Transverse colon (tissue), 4 donors: ENCODE measurements at regions of chr11 and their contacts with region 1.

Region 1: GRCh38 chr11:62081378-62082291 is 42.2 kb upstream of the INCENP start:
- DNase-seq: peak; percentile 86
- H3K4me3 ChIP-seq: no peak overlapping the region
- H3K27ac ChIP-seq: no peak overlapping the region
- H3K4me1 ChIP-seq: peaks cover 0 to 7% (median 5%) of the 10 kb centered on the region in 4 donors
- H3K27me3 ChIP-seq: no peaks in the 10 kb centered on the region
- CTCF ChIP-seq: peak; percentile 89 to 90 (median 90)
- EP300 ChIP-seq: no peak
- POLR2A ChIP-seq: no peak

Region 2: DNA sequence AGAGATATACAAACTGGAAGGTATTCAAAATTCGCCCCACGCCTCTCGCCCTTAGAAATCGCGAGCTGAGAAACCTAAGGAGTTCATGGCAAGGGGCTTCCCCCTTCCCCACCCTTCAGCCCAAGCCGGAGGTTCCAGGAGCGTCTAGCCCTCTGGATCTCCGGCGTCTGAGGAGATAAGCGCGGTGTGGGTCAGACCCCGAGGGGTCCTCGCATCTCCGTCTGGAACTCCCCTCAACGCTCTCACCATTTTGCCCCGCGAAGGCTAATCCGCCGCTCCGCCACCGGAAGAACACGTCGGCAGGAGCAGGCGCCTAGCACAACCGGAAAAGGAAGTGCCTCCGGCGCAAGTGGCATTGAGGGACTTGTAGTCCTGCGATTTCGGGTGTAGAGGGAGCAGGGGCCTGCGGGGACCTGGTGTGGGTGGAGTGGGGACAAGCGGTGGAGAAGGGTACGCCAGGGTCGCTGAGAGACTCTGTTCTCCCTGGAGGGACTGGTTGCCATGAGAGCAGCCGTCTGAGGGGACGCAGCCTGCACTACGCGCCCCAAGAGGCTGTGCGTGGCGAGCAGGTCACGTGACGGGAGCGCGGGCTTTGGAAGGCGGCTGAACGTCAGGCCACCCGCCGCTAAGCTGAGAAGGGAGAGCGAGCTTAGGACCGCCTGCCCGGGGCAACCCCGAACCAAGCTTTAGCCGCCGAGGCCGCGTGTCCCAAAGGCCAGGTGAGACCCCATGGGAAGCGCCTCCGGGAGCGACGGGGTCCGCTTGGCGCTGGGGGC is 289.1 kb before region 1 on chr11 and contains the starts of genes FEN1 and TMEM258:
- in situ Hi-C with region 1: no loop called
- intact Hi-C with region 1: loop called (anchors 10 kb)
- DNase-seq: peak; percentile 88
- H3K4me3 ChIP-seq: peak within 1 kb of the TSS; percentile 75 to 81 (median 80)
- H3K27ac ChIP-seq: peak within 1 kb of the TSS; percentile 90 to 98 (median 94)
- H3K4me1 ChIP-seq: peaks cover 5 to 23% (median 22%) of the 10 kb centered on the region in 4 donors
- H3K27me3 ChIP-seq: no peaks in the 10 kb centered on the region
- CTCF ChIP-seq: peak in 3 of 5 experiments; percentile 8 to 44 (median 10)
- EP300 ChIP-seq: no peak
- POLR2A ChIP-seq: peak; percentile 69
- total RNA-seq, gene FEN1: 1.00 to 9.4 (median 4.5) TPM
- total RNA-seq, gene TMEM258: 8.2 to 34.7 (median 23.7) TPM

Region 3: GRCh38 chr11:61888043-61888442 is 193.6 kb before region 1 on chr11:
- in situ Hi-C with region 1: loop called in 3 of 4 experiments (anchors 10 to 25 kb)
- intact Hi-C with region 1: no loop called
- DNase-seq: peak; percentile 39
- H3K4me3 ChIP-seq: no peak overlapping the region
- H3K27ac ChIP-seq: peak overlapping the region; percentile 21 to 65 (median 59)
- H3K4me1 ChIP-seq: peaks cover 6 to 25% (median 14%) of the 10 kb centered on the region in 4 donors
- H3K27me3 ChIP-seq: no peaks in the 10 kb centered on the region
- CTCF ChIP-seq: no peak
- EP300 ChIP-seq: no peak
- POLR2A ChIP-seq: no peak

Region 4: GRCh38 chr11:61899146-61899841 is 182.3 kb before region 1 on chr11:
- in situ Hi-C with region 1: loop called in 2 of 4 experiments (anchors 10 to 25 kb)
- intact Hi-C with region 1: loop called (anchors 2 kb)
- DNase-seq: peak; percentile 89
- H3K4me3 ChIP-seq: no peak overlapping the region
- H3K27ac ChIP-seq: no peak overlapping the region
- H3K4me1 ChIP-seq: peaks cover 0 to 2% (median 0%) of the 10 kb centered on the region in 4 donors
- H3K27me3 ChIP-seq: no peaks in the 10 kb centered on the region
- CTCF ChIP-seq: peak; percentile 99 to 100 (median 99)
- EP300 ChIP-seq: no peak
- POLR2A ChIP-seq: no peak

Region 5: GRCh38 chr11:62217191-62217748 is 135.6 kb after region 1 on chr11:
- in situ Hi-C with region 1: no loop called
- intact Hi-C with region 1: no loop called
- DNase-seq: no peak
- H3K4me3 ChIP-seq: no peak overlapping the region
- H3K27ac ChIP-seq: no peak overlapping the region
- H3K4me1 ChIP-seq: no peaks in the 10 kb centered on the region
- H3K27me3 ChIP-seq: no peaks in the 10 kb centered on the region
- CTCF ChIP-seq: peak in 4 of 5 experiments; percentile 28 to 49 (median 44)
- EP300 ChIP-seq: no peak
- POLR2A ChIP-seq: no peak